Activated CD4-positive, alpha-beta T cell treated with anti-CD3 and anti-CD28 coated beads for 36 hours (primary cell): ENCODE measurements at regions of chr1 and their contacts with region 1.

Region 1: GRCh38 chr1:171313835-171314320 is at the start of gene FMO4:
- DNase-seq: peak; percentile 86
- ATAC-seq: peak; percentile 100
- H3K4me3 Mint-ChIP-seq: peak within 1 kb of the TSS; percentile 72
- H3K27ac Mint-ChIP-seq: peak within 1 kb of the TSS; percentile 87
- H3K4me1 Mint-ChIP-seq: peaks cover 14% of the 10 kb centered on the region
- H3K27me3 Mint-ChIP-seq: no peaks in the 10 kb centered on the region
- total RNA-seq, gene FMO4: 1.4 to 2.8 TPM

Region 2: GRCh38 chr1:170531758-170532657 is 781.9 kb before region 1 on chr1 and contains the start of gene GORAB:
- CTCF ChIA-PET with region 1: no interaction called
- POLR2A ChIA-PET with region 1: no interaction called
- intact Hi-C with region 1: loop called in 1 of 2 experiments (anchors 2 kb)
- DNase-seq: peak; percentile 94
- ATAC-seq: peak; percentile 98
- H3K4me3 Mint-ChIP-seq: no peak within 1 kb of the TSS
- H3K27ac Mint-ChIP-seq: no peak within 1 kb of the TSS
- H3K4me1 Mint-ChIP-seq: peaks cover 15% of the 10 kb centered on the region
- H3K27me3 Mint-ChIP-seq: no peaks in the 10 kb centered on the region
- total RNA-seq, gene GORAB: 9.8 to 13.5 TPM

Region 3: DNA sequence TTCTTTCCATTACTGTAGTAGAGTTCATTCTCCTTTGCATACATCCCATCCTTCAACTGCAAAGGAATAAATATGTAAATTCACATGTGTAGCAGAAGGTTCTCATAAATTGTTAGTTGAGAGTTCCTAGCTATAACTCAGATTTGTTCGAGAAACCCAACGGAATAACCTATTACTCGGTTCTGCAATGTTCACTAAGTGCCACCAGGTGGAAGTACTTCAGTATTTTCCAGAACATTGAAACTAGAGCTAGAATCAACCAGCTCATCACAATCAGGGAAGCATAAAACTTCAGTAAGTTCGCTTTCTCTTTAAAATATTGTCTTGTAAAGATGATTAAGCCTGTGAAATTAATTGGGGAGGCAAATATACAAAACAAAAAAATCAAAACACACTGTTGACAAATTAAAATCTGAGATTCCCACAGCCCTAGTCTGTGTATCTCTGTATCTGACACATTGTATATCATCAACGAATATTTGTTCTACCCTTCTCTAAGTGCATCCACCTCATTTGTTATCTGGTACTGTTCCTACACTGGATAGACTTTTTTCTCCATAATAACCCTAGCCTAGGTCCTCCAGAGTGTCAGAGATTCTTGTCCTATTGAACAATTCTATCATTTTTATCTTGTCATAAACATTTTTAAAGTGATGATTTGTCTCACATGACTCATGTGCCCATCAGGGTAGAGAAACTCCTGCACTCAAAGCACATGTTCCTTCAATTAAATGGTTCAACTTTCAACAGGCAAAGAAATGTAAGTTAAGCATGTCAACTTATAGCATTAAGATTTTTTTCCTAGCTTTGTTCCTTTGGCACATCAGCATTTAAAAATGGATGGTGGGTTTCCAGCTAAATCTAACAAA is 346.6 kb before region 1 on chr1:
- CTCF ChIA-PET with region 1: interaction called, 17 read pairs
- POLR2A ChIA-PET with region 1: no interaction called
- intact Hi-C with region 1: loop called (anchors 1 to 5 kb)
- DNase-seq: peak; percentile 4
- ATAC-seq: no peak
- H3K4me3 Mint-ChIP-seq: no peak overlapping the region
- H3K27ac Mint-ChIP-seq: no peak overlapping the region
- H3K4me1 Mint-ChIP-seq: no peaks in the 10 kb centered on the region
- H3K27me3 Mint-ChIP-seq: peaks cover 22% of the 10 kb centered on the region

Region 4: DNA sequence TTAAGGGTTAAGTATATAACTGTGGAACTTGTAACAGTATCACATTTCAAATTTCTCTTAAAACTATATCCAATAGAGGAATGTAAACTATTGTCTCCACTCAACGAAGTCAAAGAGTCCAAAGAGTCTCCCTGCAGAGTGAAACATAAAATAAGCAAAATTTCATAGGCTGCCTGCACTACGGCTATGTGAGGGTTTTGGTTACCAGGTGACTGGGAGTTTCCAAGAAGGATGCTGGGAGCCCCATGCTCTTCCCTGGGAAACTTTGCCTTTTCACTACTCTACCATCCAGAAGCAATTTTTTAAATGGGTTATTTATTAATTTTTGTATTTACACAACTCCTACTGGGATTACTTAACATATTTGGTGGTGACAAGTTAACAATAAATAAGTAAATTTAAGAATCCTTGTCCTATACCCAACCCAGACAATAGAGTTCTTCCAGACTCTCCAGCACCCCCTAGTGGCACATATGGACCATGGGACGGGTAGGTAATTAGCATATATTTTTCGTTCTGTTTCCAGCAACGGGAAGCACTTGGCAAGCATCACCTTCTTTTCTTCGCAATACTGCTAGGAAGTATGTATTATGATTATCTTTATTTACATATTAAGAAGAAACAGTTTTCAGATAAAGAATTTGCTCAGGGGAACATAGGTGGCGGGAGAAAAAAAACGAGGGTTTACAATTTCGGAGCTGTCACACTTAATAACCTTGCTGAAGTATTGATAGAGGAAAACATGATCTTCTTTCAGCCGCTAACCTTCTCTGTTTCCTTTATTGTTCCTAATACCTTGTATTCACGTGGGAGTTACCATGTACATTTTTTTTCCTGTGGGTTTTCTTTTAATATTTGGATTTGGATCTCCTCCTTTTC is 125.3 kb before region 1 on chr1:
- CTCF ChIA-PET with region 1: interaction called, 6 read pairs
- POLR2A ChIA-PET with region 1: no interaction called
- intact Hi-C with region 1: loop called in 1 of 2 experiments (anchors 2 kb)
- DNase-seq: peak; percentile 64
- ATAC-seq: peak; percentile 69
- H3K4me3 Mint-ChIP-seq: no peak overlapping the region
- H3K27ac Mint-ChIP-seq: no peak overlapping the region
- H3K4me1 Mint-ChIP-seq: no peaks in the 10 kb centered on the region
- H3K27me3 Mint-ChIP-seq: peaks cover 16% of the 10 kb centered on the region

Region 5: DNA sequence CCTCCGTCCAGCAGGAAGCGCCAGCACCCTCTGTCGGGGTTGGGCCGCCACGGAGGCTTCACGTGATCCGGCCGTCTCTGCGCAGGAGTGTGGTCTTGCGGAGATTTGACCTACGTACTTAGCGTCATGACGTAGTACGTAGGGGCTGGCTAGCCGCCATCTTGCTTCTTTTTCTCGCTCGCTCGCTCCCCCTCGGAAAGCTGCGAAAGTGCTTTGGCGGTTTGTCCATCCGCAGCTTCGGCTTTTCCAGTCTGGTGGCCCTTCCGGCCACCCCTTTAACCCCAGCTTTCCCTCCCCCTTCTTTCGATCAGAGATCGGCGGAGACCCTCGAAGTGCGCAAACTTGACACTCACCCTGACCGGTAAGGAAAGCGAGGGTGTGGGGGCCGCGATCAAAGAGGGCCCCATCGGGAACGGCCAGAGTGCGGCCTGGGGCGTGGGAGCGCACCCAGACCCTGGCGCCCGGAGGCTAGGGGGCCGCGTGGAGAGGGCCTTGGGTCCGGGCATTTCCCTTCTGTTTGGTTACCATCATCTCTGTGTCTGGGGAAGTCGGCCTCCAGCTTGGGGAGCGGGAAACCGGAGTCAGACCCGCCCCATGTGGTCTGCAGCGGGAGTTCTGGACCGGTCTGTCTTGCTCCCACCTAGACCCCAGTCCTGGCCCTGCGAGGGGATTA is 171.6 kb after region 1 on chr1 and contains the start of gene PRRC2C:
- CTCF ChIA-PET with region 1: interaction called, 6 read pairs
- POLR2A ChIA-PET with region 1: interaction called, 3 read pairs
- intact Hi-C with region 1: loop called in 1 of 2 experiments (anchors 1 kb)
- DNase-seq: peak; percentile 97
- ATAC-seq: peak; percentile 90
- H3K4me3 Mint-ChIP-seq: peak within 1 kb of the TSS; percentile 82
- H3K27ac Mint-ChIP-seq: peak within 1 kb of the TSS; percentile 95
- H3K4me1 Mint-ChIP-seq: peaks cover 43% of the 10 kb centered on the region
- H3K27me3 Mint-ChIP-seq: no peaks in the 10 kb centered on the region
- total RNA-seq, gene PRRC2C: 233 to 351 TPM